ENCODE measurements at regions of chr14 and their contacts with region 1.

Region 1: DNA sequence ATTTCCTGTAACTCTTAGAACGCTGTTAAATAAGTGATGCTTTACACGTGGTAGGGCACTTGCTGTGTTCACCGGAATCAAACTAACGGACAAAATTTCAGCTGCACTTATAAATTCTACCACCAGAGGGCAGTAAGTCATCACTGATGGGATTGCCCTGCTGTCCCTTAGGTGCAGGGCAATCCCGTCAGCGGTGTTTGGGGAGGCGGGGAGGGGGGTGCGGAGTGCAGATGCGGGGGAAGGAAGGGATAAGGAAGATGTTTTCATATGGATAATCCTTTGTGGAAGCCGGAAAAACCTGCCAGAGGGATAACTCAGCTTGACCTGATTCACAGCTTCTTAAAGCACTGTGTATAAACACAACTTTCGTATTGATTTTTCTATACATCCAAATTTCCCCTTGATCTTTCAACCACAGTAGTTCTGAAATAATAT is 21.7 kb upstream of the SLC10A1 start:
- DNase-seq: peak; percentile 74
- CTCF ChIP-seq: peak; percentile 87

Region 2: DNA sequence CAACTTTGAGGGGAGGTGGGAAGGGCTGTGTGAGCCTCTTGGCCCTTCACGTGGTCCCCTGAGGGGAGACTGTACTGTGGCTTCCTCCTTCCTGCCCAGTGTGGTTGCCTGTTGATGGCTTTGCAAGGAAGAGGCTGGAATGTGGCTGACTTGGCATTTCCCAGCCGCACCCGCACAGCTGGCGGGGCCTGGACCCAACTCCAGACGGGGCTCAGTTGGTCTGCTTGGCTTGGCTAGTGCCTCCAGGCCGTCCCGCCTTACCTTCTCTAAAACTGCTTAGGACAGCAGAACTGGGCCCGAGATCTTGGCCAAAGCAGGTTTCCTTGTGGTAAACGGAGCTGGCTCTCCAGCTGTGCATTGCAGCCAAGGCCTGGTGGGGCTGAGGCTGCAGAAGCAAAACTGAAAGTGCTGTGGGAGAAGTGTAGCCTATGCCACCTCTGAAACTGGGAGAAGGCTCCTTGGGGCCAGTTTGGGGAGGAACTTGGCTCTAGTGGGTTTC is 200.0 kb after region 1 on chr14:
- CTCF ChIA-PET with region 1: interaction called, 33 read pairs
- POLR2A ChIA-PET with region 1: no interaction called
- DNase-seq: peak; percentile 36
- CTCF ChIP-seq: no peak